ENCODE measurements at regions of chr7 and their contacts with region 1.

Region 1: DNA sequence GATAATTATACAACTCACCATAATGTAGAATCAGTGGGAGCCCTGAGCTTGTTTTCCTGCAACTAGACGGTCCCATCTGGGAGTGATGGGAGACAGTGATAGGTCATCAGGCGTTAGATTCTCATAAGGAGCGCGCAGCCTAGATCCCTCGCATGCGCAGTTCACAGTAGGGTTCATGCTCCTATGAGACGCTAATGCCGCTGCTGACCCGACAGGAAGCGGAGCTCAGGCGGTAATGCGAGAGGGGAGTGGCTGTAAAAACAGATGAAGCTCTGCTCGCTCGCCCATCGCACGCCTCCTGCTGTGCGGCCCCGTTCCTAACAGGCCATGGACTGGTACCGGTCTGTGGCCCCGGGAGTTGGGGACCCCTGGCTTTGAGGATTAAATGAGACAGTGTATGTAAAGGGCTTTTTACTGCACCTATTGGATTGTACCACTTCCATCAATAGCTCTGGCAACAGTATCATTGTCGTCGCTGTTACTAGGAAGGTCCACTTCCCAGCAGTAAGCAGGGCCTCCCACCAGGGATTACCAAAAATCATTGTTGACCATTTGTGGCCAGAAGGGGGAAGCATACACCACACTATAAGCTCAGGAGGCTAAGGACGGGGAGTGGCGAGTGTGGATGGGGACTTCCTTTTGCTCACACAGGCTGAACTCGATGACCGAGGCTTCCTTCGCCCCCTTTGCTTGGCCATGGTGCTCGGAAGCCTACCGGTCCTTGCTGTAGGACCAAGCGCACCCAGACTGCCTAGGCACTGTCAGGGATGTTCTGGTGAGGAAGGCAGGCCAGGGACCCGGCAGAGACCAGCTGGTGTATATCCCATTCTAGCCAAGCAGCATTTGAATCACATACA is 26.4 kb downstream of the AKR1B1 start:
- DNase-seq: peak; percentile 88 to 91
- H3K4me3 ChIP-seq: peak overlapping the region; percentile 51
- H3K27ac ChIP-seq: peak overlapping the region; percentile 80
- H3K4me1 ChIP-seq: peaks cover 48% of the 10 kb centered on the region
- H3K27me3 ChIP-seq: no peaks in the 10 kb centered on the region
- CTCF ChIP-seq: peak; percentile 96

Region 2: DNA sequence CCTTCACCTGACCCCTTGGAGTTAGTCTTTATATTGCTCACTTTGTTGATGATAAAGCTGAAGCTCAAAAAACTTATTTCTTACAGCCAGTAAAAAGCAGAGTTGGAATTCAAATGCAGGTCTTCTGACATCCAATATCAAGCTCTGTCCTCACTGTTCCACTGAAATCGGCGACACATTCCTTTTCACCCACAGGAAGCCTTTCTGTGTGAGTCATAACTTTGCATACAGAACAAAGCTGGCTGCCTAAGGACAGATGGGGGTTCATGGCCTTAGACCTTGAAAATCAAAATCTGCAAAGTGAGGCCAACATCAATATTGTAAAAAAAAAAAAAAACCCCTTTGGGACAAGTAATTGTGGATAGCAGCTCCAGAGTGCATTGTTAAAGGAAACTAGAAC is 48.2 kb after region 1 on chr7:
- CTCF ChIA-PET with region 1: interaction called, 16 read pairs
- POLR2A ChIA-PET with region 1: interaction called, 10 read pairs
- intact Hi-C with region 1: no loop called
- DNase-seq: peak; percentile 59 to 94
- H3K4me3 ChIP-seq: peak overlapping the region; percentile 37; the same call in 1 of the 2 replicates
- H3K27ac ChIP-seq: peak overlapping the region; percentile 88
- H3K4me1 ChIP-seq: peaks cover 65% of the 10 kb centered on the region
- H3K27me3 ChIP-seq: no peaks in the 10 kb centered on the region
- CTCF ChIP-seq: no peak

Region 3: GRCh38 chr7:134547397-134548054 is 115.0 kb after region 1 on chr7:
- CTCF ChIA-PET with region 1: interaction called, 11 read pairs
- POLR2A ChIA-PET with region 1: interaction called, 3 read pairs
- intact Hi-C with region 1: loop called (anchors 1 kb)
- DNase-seq: peak; percentile 75 to 77
- H3K4me3 ChIP-seq: peak overlapping the region; percentile 20; the same call in 1 of the 2 replicates
- H3K27ac ChIP-seq: peak overlapping the region; percentile 84
- H3K4me1 ChIP-seq: peaks cover 42% of the 10 kb centered on the region
- H3K27me3 ChIP-seq: no peaks in the 10 kb centered on the region
- CTCF ChIP-seq: peak; percentile 97

Region 4: DNA sequence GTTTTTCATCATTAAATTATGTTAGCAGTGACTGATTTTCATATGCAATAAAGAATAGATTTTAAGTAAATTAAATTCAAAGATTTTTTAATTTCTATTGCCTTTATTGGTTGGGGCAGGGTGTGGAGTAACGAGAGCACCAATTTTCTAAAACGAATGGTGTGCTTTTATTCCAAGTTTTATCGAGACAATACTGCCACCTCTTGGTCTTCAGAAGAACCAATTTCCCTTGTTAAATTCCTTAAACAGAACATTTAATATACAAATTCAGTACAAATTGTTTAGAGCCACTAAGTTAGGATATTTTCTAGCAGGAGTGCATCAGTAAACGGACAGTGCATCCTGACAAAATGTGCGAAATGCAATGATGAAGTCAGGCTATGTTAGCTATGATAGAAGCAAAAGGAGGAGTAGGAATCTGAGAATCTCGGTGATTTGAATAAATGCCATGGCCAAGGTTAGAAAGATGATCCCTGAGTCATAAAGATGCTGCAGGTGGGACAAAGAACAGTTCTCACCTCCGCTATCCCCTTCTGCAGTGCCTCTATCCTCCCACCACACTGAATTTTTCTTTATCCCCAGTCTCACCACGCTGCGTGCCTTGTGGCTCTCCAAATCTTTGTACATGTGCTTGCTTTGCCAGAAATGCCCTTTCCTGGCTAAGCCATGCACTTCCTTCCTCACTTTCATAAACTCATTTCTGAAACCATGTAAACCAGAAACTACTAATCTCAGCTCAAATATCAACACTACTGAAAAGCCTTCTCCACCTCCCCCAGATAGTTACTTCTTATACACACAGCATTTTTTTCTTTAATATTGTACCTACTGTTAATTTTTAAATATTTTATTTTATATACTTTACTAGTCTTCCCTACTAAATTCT is 521.9 kb after region 1 on chr7:
- CTCF ChIA-PET with region 1: no interaction called
- POLR2A ChIA-PET with region 1: interaction called, 3 read pairs
- intact Hi-C with region 1: loop called (anchors 1 kb)
- DNase-seq: peak in 1 of 2 experiments; percentile 40
- H3K4me3 ChIP-seq: no peak overlapping the region
- H3K27ac ChIP-seq: no peak overlapping the region
- H3K4me1 ChIP-seq: no peaks in the 10 kb centered on the region
- H3K27me3 ChIP-seq: no peaks in the 10 kb centered on the region
- CTCF ChIP-seq: peak; percentile 87

Region 5: DNA sequence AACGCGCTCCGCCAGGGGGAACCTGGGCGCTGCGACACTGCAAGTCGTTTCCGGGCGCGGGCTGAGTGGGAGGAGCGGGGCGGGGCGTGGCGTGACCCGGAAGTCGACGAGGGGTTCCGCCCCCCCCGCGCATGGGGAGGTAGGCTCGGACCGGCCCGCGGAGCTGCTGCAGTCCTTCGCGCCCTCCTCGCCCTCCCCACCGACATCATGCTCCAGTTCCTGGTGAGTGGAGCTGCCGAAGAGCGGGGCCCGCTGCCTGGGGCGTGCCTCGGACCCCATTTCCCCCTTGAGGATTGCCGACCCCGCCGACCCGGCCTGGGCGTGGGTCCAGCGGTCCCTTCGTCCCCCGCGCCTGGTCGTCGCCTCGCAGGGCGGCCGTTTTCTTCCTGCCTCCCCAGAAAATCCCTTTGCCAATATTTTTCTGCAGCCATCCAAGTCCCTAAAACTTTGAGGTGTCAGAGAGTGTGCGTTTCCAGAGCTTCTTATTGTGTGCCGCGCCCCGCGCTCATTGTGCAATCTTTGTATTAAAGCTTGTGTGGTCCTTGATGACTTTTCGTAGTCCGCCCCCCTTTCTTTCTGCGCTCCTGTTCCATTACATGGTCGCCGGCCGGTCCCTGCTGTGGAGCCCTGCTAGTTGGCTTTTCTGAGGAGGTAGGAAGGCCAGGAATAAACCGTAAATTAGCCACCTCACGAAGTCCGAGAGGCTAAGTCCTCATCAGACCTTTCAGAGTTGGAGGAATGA is 1230.0 kb after region 1 on chr7 and contains the start of gene STMP1:
- CTCF ChIA-PET with region 1: no interaction called
- POLR2A ChIA-PET with region 1: interaction called, 10 read pairs
- intact Hi-C with region 1: no loop called
- DNase-seq: peak; percentile 83 to 97
- H3K4me3 ChIP-seq: peak within 1 kb of the TSS; percentile 99
- H3K27ac ChIP-seq: peak within 1 kb of the TSS; percentile 92
- H3K4me1 ChIP-seq: peaks cover 16% of the 10 kb centered on the region
- H3K27me3 ChIP-seq: no peaks in the 10 kb centered on the region
- CTCF ChIP-seq: peak; percentile 89
- total RNA-seq, gene STMP1: 60.4 and 77.0 TPM in 2 replicates

Measured in PC-9 (cell line).